ENCODE measurements at regions of chr16 and their contacts with region 1.

Region 1: DNA sequence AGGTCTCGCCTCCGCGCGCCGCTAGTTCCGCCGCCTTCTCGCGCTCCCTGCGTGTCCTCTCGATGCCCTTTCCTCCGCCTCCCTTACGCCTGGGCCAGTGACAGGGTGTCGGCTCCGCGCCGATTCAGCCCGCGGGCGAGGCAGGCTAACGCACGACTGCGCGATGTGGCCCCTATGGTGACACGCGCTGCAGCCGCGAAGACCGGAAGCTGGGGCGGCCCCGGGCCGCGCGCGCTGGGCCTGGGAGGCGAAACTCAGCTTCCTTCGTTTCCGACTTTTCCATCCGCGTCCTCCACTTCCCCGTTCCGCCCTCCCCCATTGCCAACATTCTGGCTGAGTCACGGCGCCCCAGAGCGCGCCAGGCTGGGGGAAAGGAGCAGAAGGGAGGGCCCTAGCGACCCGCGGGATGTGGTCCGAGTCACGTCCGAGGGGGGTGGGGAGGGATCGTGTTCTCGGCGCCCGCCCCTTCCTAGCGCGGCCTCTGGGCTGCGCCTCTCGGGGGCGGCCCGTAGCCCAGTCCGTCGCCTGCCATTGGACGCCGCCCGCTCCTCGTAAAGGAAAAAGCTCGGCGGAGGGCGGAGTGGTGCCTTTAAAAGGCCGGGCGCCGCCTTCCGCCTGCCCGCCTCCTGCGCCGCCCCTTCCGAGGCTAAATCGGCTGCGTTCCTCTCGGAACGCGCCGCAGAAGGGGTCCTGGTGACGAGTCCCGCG is at the start of gene ALDOA:
- H3K4me3 Mint-ChIP-seq: peak within 1 kb of the TSS; percentile 95
- H3K27ac Mint-ChIP-seq: peak within 1 kb of the TSS; percentile 99
- H3K4me1 Mint-ChIP-seq: peaks cover 51% of the 10 kb centered on the region
- H3K27me3 Mint-ChIP-seq: no peaks in the 10 kb centered on the region

Region 2: GRCh38 chr16:29831490-29831889 is 233.8 kb before region 1 on chr16:
- intact Hi-C with region 1: no loop called
- H3K4me3 Mint-ChIP-seq: no peak overlapping the region
- H3K27ac Mint-ChIP-seq: no peak overlapping the region
- H3K4me1 Mint-ChIP-seq: peaks cover 6% of the 10 kb centered on the region
- H3K27me3 Mint-ChIP-seq: no peaks in the 10 kb centered on the region

Region 3: GRCh38 chr16:30052671-30053372 is 12.5 kb before region 1 on chr16:
- intact Hi-C with region 1: loop called (anchors 1 kb)
- H3K4me3 Mint-ChIP-seq: peak overlapping the region; percentile 87
- H3K27ac Mint-ChIP-seq: peak overlapping the region; percentile 55
- H3K4me1 Mint-ChIP-seq: peaks cover 22% of the 10 kb centered on the region
- H3K27me3 Mint-ChIP-seq: no peaks in the 10 kb centered on the region

Region 4: GRCh38 chr16:30091474-30092372 is 26.4 kb after region 1 on chr16 and contains the start of gene TBX6:
- intact Hi-C with region 1: loop called (anchors 1 kb)
- H3K4me3 Mint-ChIP-seq: peak within 1 kb of the TSS; percentile 76
- H3K27ac Mint-ChIP-seq: peak within 1 kb of the TSS; percentile 94
- H3K4me1 Mint-ChIP-seq: peaks cover 88% of the 10 kb centered on the region
- H3K27me3 Mint-ChIP-seq: no peaks in the 10 kb centered on the region